Activated CD4-positive, alpha-beta memory T cell treated with anti-CD3 and anti-CD28 coated beads for 36 hours (primary cell): ENCODE measurements at regions of chr1 and their contacts with region 1.

Region 1: GRCh38 chr1:212782422-212783154 is 9.0 kb downstream of the NSL1 start:
- DNase-seq: no peak
- H3K4me3 Mint-ChIP-seq: no peak overlapping the region
- H3K27ac Mint-ChIP-seq: peak overlapping the region; percentile 6
- H3K4me1 Mint-ChIP-seq: peaks cover 37% of the 10 kb centered on the region
- H3K27me3 Mint-ChIP-seq: no peaks in the 10 kb centered on the region

Region 2: GRCh38 chr1:212488397-212489283 is 293.9 kb before region 1 on chr1:
- CTCF ChIA-PET with region 1: no interaction called
- POLR2A ChIA-PET with region 1: no interaction called
- intact Hi-C with region 1: no loop called
- DNase-seq: peak; percentile 69
- H3K4me3 Mint-ChIP-seq: no peak overlapping the region
- H3K27ac Mint-ChIP-seq: peak overlapping the region; percentile 36
- H3K4me1 Mint-ChIP-seq: peaks cover 7% of the 10 kb centered on the region
- H3K27me3 Mint-ChIP-seq: no peaks in the 10 kb centered on the region

Region 3: DNA sequence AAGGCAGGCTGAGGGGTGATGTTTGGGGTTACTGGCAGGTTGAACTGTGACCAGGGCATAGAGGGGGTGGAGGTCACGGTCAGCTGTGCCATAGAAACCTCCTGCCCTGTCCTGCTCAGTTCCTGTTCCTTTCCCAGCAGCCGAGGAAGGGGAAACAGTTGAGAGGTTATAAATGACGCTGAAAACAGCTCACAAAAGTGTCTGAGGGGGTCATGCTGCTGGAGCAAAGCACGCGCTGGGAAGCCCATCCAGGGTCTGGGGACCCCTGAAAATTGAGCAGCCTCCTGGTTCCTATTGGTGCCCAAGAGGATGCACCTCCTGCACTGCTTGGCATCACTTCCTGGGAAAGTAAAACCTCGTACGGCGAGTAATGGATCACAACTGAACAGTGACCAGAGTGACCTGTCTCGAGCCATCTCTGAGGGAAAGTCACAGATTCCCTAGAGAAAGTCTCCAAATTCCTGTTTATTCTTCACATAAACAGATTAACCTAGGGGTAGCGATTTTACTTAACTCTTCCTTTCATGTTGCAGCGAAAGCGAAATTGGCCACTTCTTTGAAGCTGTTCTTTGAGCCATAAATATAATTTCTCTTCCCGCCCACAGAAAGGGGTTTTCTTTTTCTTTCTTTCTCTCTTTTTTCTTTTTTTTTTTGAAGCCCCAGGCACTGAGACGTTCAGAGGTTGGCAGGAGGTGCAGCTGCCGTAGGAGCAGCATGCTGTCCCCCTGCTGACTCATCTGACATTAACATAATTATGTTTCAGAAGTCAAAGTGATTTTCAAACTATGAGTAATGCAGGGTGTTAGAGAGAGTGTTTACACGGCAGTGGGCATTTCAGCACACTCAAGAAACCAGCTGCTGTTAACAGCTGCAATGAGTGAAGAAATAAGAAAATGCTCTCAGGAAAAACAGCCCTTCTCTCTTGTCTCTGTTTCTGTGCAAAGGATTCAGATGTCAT is 215.8 kb before region 1 on chr1:
- CTCF ChIA-PET with region 1: no interaction called
- POLR2A ChIA-PET with region 1: no interaction called
- intact Hi-C with region 1: loop called (anchors 5 kb)
- DNase-seq: peak; percentile 79
- H3K4me3 Mint-ChIP-seq: peak overlapping the region; percentile 73
- H3K27ac Mint-ChIP-seq: peak overlapping the region; percentile 82
- H3K4me1 Mint-ChIP-seq: peaks cover 33% of the 10 kb centered on the region
- H3K27me3 Mint-ChIP-seq: peaks cover 2% of the 10 kb centered on the region

Region 4: GRCh38 chr1:212769459-212770167 is 13.0 kb before region 1 on chr1:
- CTCF ChIA-PET with region 1: interaction called, 12 read pairs
- POLR2A ChIA-PET with region 1: no interaction called
- intact Hi-C with region 1: no loop called
- DNase-seq: no peak
- H3K4me3 Mint-ChIP-seq: peak overlapping the region; percentile 34
- H3K27ac Mint-ChIP-seq: peak overlapping the region; percentile 30
- H3K4me1 Mint-ChIP-seq: peaks cover 55% of the 10 kb centered on the region
- H3K27me3 Mint-ChIP-seq: no peaks in the 10 kb centered on the region